B cell (primary cell): ENCODE measurements at regions of chr9 and their contacts with region 1.

Region 1: DNA sequence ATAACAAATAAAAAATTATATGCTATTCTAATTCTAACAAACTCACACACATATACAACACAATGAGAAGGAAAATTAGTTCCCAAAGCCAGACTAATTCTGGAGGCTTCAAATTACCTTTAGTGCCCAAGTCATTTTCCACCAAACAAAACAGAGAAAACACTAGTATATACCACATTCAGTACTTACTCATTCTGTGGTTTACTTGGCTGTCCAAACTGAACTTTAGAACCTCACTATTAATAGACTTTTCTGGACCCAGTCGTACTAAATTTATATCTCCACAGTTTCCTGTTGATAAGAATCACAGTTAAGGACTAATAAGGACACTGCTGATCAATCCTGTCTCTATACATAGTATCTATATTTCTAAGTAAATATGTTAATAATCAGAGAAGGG is 66.4 kb downstream of the SETX start:
- DNase-seq: no peak
- ATAC-seq: no peak
- H3K4me3 ChIP-seq: no peak overlapping the region
- H3K4me3 Mint-ChIP-seq: no peak overlapping the region
- H3K27ac ChIP-seq: no peak overlapping the region
- H3K27ac Mint-ChIP-seq: peak overlapping the region; percentile 10
- H3K4me1 ChIP-seq: no peaks in the 10 kb centered on the region
- H3K4me1 Mint-ChIP-seq: peaks cover 2% of the 10 kb centered on the region
- H3K27me3 ChIP-seq: no peaks in the 10 kb centered on the region
- H3K27me3 Mint-ChIP-seq: no peaks in the 10 kb centered on the region
- CTCF ChIP-seq: no peak

Region 2: DNA sequence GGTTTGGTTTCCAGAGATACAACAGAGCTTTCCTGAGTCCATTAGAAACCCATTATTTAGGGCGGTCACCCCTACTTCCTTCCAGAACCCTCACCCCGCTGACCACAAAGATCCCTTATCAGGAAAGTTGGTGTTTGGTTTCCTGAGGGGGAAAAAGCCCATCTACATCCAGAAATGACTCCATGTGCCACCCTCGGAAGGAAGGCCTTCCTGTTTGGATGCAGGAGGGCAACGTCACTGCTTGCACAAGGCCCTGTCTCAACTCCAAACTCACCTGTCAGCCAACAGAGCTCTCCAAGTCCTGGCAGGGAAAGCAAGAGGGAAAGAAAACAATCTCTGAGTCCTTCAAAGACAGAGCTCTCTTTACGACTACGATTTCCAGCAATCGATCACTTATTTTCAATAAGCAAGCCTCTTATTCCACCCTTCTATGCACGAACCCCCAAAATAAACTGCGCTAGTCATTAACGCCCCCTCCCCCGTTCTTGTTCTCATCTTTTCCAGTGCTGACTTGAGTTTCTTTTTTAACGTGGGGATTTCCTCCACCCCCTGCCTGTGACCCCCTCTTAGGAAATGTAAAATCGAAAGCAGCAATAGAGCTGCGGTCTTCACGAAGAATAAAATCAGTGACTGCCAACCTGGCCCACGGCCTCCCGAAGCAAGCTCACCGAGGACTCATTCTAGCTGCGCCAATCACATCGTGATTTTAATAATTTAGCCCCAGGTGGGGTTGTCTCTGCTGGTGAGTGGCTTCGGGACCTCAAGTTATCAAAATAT is 162.2 kb before region 1 on chr9:
- CTCF ChIA-PET with region 1: no interaction called
- POLR2A ChIA-PET with region 1: no interaction called
- intact Hi-C with region 1: no loop called
- DNase-seq: no peak
- ATAC-seq: no peak
- H3K4me3 ChIP-seq: no peak overlapping the region
- H3K4me3 Mint-ChIP-seq: peak overlapping the region; percentile 11
- H3K27ac ChIP-seq: no peak overlapping the region
- H3K27ac Mint-ChIP-seq: no peak overlapping the region
- H3K4me1 ChIP-seq: peaks cover 0 to 3% of the 10 kb centered on the region in 2 donors
- H3K4me1 Mint-ChIP-seq: peaks cover 5% of the 10 kb centered on the region
- H3K27me3 ChIP-seq: peaks cover 0 to 47% (median 14%) of the 10 kb centered on the region in 4 experiments
- H3K27me3 Mint-ChIP-seq: peaks cover 77% of the 10 kb centered on the region
- CTCF ChIP-seq: no peak

Region 3: GRCh38 chr9:132333556-132333955 is 45.2 kb after region 1 on chr9:
- CTCF ChIA-PET with region 1: no interaction called
- POLR2A ChIA-PET with region 1: no interaction called
- intact Hi-C with region 1: loop called (anchors 10 kb)
- DNase-seq: no peak
- ATAC-seq: no peak
- H3K4me3 ChIP-seq: no peak overlapping the region
- H3K4me3 Mint-ChIP-seq: no peak overlapping the region
- H3K27ac ChIP-seq: no peak overlapping the region
- H3K27ac Mint-ChIP-seq: no peak overlapping the region
- H3K4me1 ChIP-seq: no peaks in the 10 kb centered on the region
- H3K4me1 Mint-ChIP-seq: peaks cover 3% of the 10 kb centered on the region
- H3K27me3 ChIP-seq: no peaks in the 10 kb centered on the region
- H3K27me3 Mint-ChIP-seq: no peaks in the 10 kb centered on the region
- CTCF ChIP-seq: no peak